ENCODE measurements at regions of chr20 and their contacts with region 1.

Region 1: DNA sequence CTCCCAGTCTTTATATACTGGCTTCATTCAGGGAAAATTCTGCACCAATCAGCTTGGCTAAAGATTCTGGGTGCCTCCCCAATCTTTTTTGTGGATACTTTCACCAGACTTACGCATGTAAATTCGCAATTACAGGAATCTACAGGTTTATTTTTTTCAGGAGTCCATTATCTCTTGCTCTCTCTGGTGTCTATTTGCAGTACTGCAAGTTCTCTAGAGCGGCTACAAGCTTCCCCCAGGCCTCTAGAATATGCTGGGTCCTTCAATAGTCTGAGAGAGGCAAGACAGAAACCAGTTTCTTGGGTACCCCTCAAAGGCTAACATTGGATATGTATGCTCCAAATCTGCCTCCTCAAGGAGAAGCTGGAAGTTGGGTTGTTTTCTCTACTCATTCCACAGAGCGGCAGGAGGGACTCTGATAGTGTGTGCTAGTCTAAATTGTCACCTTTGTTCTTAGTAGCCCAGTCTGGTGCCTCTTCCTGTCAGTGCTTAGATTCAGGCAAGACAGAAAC is 58.5 kb downstream of the SUN5 start:
- DNase-seq: peak; percentile 37
- ATAC-seq: peak; percentile 97
- H3K4me3 Mint-ChIP-seq: no peak overlapping the region
- H3K27ac Mint-ChIP-seq: peak overlapping the region; percentile 84
- H3K4me1 Mint-ChIP-seq: peaks cover 28% of the 10 kb centered on the region
- H3K27me3 Mint-ChIP-seq: no peaks in the 10 kb centered on the region
- CTCF ChIP-seq: peak; percentile 80

Region 2: DNA sequence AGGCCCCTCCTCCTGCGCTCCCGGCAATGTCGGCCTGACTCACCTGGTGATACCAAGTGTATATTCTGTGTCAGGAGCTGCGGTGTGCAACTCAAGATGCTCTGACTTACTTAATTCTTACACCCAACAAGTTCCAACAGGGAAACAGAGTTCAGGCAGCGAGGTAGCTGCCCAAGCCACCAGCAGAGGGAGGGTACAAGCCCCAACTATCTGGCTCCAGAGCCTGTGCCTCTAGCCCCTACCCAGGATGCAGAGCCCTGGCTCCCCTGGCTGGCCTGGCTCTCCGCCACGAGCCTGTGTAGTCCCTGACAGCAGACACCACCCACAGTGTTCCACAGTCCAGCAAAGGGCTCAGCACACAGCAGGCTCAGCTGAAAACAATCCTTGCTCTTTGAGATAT is 306.9 kb before region 1 on chr20:
- CTCF ChIA-PET with region 1: no interaction called
- POLR2A ChIA-PET with region 1: no interaction called
- intact Hi-C with region 1: no loop called
- DNase-seq: no peak
- ATAC-seq: no peak
- H3K4me3 Mint-ChIP-seq: no peak overlapping the region
- H3K27ac Mint-ChIP-seq: no peak overlapping the region
- H3K4me1 Mint-ChIP-seq: no peaks in the 10 kb centered on the region
- H3K27me3 Mint-ChIP-seq: no peaks in the 10 kb centered on the region
- CTCF ChIP-seq: no peak

Region 3: GRCh38 chr20:32902456-32903420 is 43.0 kb before region 1 on chr20:
- CTCF ChIA-PET with region 1: interaction called, 38 read pairs
- POLR2A ChIA-PET with region 1: interaction called, 3 read pairs
- intact Hi-C with region 1: no loop called
- DNase-seq: peak; percentile 78
- ATAC-seq: peak; percentile 94
- H3K4me3 Mint-ChIP-seq: no peak overlapping the region
- H3K27ac Mint-ChIP-seq: no peak overlapping the region
- H3K4me1 Mint-ChIP-seq: peaks cover 19% of the 10 kb centered on the region
- H3K27me3 Mint-ChIP-seq: no peaks in the 10 kb centered on the region
- CTCF ChIP-seq: peak; percentile 94

Region 4: DNA sequence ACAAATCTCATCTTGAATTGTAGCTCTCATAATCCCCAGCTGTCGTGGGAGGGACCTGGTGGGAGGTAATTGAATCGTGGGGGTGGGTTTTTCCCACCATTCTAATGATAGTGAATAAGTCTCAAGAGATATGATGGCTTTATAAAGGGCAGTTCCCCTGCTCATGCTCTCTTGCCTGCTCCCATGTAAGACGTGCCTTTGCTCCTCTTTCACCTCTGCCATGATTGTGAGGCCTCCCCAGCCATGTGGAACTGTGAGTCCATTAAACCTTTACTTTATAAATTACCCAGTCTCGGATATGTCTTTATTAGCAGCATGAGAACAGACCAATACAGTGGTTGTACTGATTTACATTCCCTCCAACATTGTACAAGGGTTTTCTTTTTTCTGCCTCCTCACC is 11.2 kb before region 1 on chr20:
- CTCF ChIA-PET with region 1: interaction called, 28 read pairs
- POLR2A ChIA-PET with region 1: no interaction called
- intact Hi-C with region 1: no loop called
- DNase-seq: no peak
- ATAC-seq: no peak
- H3K4me3 Mint-ChIP-seq: no peak overlapping the region
- H3K27ac Mint-ChIP-seq: no peak overlapping the region
- H3K4me1 Mint-ChIP-seq: peaks cover 1% of the 10 kb centered on the region
- H3K27me3 Mint-ChIP-seq: no peaks in the 10 kb centered on the region
- CTCF ChIP-seq: no peak

Region 5: DNA sequence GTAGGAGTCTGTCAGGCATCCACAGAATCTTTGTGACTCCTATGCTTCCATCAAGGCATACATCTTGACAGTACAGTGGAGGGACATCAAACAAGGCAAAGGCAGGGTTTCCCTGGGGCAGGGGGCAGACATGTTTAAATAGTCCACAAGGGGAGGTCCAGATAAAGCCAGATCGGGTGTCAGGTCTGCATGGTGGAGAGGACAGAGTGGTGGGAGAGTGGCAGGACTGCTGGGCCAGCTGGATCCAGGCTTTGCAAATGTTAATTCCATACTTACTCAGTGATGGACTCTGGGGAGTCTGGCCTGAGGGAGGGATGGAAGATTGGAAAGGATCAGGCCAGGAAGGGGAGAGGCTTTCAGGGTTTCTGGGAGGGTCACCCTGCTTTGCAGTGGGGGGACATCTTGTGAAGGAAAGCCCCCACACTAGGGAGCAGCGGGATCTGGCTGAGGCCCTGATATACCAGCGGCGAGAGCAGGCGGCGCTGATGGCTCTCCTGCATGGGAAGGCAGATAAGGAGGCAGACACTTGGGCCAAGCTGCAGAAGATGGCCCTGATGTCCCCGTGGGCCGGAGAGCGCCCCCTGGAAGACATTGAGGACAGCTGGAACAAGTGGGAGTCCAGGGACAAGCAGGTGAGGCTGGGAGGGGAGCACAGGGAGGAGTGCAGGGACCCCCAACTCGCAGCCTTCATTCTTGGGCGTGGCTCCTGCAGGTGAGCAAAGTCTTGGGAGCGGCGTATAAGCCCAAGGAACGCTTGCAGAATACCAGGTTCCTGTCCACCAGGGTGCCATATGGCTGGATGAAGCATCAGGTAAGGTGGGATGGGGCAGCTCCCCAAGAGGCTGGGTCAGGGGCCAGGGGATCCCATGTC is 13.8 kb after region 1 on chr20:
- CTCF ChIA-PET with region 1: interaction called, 11 read pairs
- POLR2A ChIA-PET with region 1: no interaction called
- intact Hi-C with region 1: no loop called
- DNase-seq: no peak
- ATAC-seq: no peak
- H3K4me3 Mint-ChIP-seq: no peak overlapping the region
- H3K27ac Mint-ChIP-seq: no peak overlapping the region
- H3K4me1 Mint-ChIP-seq: peaks cover 14% of the 10 kb centered on the region
- H3K27me3 Mint-ChIP-seq: no peaks in the 10 kb centered on the region
- CTCF ChIP-seq: no peak

Region 6: GRCh38 chr20:32966881-32967781 is 21.4 kb after region 1 on chr20:
- CTCF ChIA-PET with region 1: interaction called, 40 read pairs
- POLR2A ChIA-PET with region 1: interaction called, 10 read pairs
- intact Hi-C with region 1: no loop called
- DNase-seq: peak; percentile 82
- ATAC-seq: peak; percentile 31
- H3K4me3 Mint-ChIP-seq: peak overlapping the region; percentile 28
- H3K27ac Mint-ChIP-seq: peak overlapping the region; percentile 71
- H3K4me1 Mint-ChIP-seq: peaks cover 74% of the 10 kb centered on the region
- H3K27me3 Mint-ChIP-seq: no peaks in the 10 kb centered on the region
- CTCF ChIP-seq: no peak

Region 7: GRCh38 chr20:32972181-32973076 is 26.7 kb after region 1 on chr20:
- CTCF ChIA-PET with region 1: interaction called, 40 read pairs
- POLR2A ChIA-PET with region 1: interaction called, 10 read pairs
- intact Hi-C with region 1: no loop called
- DNase-seq: peak; percentile 95
- ATAC-seq: peak; percentile 80
- H3K4me3 Mint-ChIP-seq: no peak overlapping the region
- H3K27ac Mint-ChIP-seq: no peak overlapping the region
- H3K4me1 Mint-ChIP-seq: peaks cover 73% of the 10 kb centered on the region
- H3K27me3 Mint-ChIP-seq: no peaks in the 10 kb centered on the region
- CTCF ChIP-seq: no peak

Region 8: GRCh38 chr20:33005132-33005566 is 59.4 kb after region 1 on chr20:
- CTCF ChIA-PET with region 1: interaction called, 31 read pairs
- POLR2A ChIA-PET with region 1: no interaction called
- intact Hi-C with region 1: no loop called
- DNase-seq: peak; percentile 44
- ATAC-seq: peak; percentile 77
- H3K4me3 Mint-ChIP-seq: no peak overlapping the region
- H3K27ac Mint-ChIP-seq: no peak overlapping the region
- H3K4me1 Mint-ChIP-seq: peaks cover 9% of the 10 kb centered on the region
- H3K27me3 Mint-ChIP-seq: no peaks in the 10 kb centered on the region
- CTCF ChIP-seq: peak; percentile 83

Region 9: DNA sequence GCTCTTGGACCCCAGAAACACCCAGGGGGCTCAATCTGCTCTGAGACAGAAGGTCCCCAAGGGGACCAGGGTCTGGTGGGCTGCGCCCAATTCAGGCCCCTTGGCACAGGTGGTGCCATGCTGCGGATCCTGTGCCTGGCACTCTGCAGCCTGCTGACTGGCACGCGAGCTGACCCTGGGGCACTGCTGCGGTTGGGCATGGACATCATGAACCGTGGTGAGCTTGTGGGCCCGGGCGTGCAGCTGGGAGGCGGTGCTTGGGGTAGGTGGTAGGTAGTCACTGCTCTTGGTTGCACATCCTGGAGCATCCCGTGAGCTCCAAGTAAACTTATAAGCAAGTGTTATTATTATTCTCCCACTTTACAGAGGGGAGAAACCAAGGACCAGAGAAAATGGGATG is 85.8 kb after region 1 on chr20 and contains the start of gene BPIFB6:
- CTCF ChIA-PET with region 1: no interaction called
- POLR2A ChIA-PET with region 1: no interaction called
- intact Hi-C with region 1: no loop called
- DNase-seq: no peak
- ATAC-seq: no peak
- H3K4me3 Mint-ChIP-seq: no peak within 1 kb of the TSS
- H3K27ac Mint-ChIP-seq: no peak within 1 kb of the TSS
- H3K4me1 Mint-ChIP-seq: no peaks in the 10 kb centered on the region
- H3K27me3 Mint-ChIP-seq: no peaks in the 10 kb centered on the region
- CTCF ChIP-seq: no peak
- total RNA-seq, gene BPIFB6: not detected

Region 10: DNA sequence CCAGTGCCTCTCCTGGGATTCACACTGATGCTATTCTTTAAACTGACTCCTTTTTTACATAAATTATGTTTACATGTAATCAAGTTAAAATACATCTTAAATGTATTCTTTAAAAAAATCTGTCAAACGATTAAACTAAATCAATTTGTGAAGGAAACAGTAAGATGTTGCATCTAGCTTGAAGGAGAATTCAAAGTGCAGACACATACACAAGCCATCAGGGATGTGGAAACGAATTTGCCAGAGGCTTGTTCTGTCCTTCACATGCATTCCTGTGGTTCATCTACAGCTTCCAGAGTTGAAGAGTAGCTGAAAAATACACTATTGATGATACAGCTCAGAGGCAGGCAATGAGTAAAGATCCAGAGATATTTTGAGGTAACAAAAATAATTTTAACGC is 100.6 kb after region 1 on chr20:
- CTCF ChIA-PET with region 1: no interaction called
- POLR2A ChIA-PET with region 1: no interaction called
- intact Hi-C with region 1: no loop called
- DNase-seq: no peak
- ATAC-seq: no peak
- H3K4me3 Mint-ChIP-seq: no peak overlapping the region
- H3K27ac Mint-ChIP-seq: no peak overlapping the region
- H3K4me1 Mint-ChIP-seq: no peaks in the 10 kb centered on the region
- H3K27me3 Mint-ChIP-seq: no peaks in the 10 kb centered on the region
- CTCF ChIP-seq: no peak

Region 11: DNA sequence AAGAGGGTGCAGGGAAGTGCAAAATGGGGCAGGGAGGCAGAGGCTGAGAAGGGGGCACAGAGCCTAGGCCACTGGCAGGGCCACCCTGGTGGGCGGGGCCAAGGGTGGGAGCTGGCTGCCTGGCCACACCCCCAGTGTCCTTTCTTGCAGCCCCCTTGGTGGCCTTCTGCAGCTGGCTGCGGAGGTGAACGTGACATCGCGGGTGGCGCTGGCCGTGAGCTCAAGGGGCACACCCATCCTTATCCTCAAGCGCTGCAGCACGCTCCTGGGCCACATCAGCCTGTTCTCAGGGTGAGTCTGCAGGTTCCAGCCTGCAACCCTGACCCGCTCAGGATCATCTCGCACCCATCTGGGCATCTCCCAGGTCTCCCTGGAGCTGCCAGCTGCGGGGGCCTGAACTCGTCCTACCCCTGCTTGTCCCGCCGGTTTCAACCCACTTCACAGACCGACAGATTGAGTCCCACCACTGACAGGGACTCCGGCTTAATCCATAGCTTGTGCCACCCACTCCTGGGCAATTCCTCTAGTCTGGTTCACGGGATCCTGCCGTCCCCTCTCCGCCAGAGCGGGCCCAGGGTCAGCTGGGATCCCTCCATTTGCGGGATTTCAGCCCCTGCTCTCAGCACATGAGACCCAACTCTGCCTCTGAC is 114.1 kb after region 1 on chr20:
- CTCF ChIA-PET with region 1: no interaction called
- POLR2A ChIA-PET with region 1: no interaction called
- intact Hi-C with region 1: no loop called
- DNase-seq: no peak
- ATAC-seq: no peak
- H3K4me3 Mint-ChIP-seq: no peak overlapping the region
- H3K27ac Mint-ChIP-seq: no peak overlapping the region
- H3K4me1 Mint-ChIP-seq: no peaks in the 10 kb centered on the region
- H3K27me3 Mint-ChIP-seq: no peaks in the 10 kb centered on the region
- CTCF ChIP-seq: no peak